Calu3 (cell line): ENCODE measurements at regions of chr3 and their contacts with region 1.

Region 1: GRCh38 chr3:58532794-58533220 is 4.2 kb downstream of the ACOX2 start:
- DNase-seq: peak; percentile 82
- H3K4me3 Mint-ChIP-seq: no peak overlapping the region
- H3K27ac Mint-ChIP-seq: no peak overlapping the region
- H3K4me1 Mint-ChIP-seq: peaks cover 34% of the 10 kb centered on the region
- H3K27me3 Mint-ChIP-seq: no peaks in the 10 kb centered on the region
- CTCF ChIP-seq: peak; percentile 72

Region 2: DNA sequence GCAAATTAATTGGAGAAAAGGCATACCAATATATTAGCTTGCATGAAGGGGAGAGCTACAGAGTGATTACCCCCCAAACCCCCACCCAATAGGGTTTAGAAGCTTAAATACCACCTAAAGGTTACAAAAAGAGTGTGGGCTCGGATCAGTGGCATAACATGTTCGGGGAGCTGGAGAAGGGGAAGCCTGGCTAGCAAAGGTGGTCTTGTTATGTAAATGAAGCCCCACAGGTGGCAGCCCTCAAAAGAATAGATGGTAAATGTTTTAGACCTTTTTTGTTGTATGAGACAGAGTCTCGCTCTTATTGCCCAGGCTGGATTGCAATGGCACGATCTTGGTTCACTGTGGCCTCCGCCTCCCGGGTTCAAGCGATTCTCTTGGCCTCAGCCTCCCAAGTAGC is 211.0 kb before region 1 on chr3:
- CTCF ChIA-PET with region 1: interaction called, 4 read pairs
- intact Hi-C with region 1: loop called (anchors 2 kb)
- DNase-seq: no peak
- H3K4me3 Mint-ChIP-seq: no peak overlapping the region
- H3K27ac Mint-ChIP-seq: no peak overlapping the region
- H3K4me1 Mint-ChIP-seq: peaks cover 5% of the 10 kb centered on the region
- H3K27me3 Mint-ChIP-seq: no peaks in the 10 kb centered on the region
- CTCF ChIP-seq: no peak

Region 3: GRCh38 chr3:58422756-58423325 is 110.0 kb before region 1 on chr3:
- CTCF ChIA-PET with region 1: no interaction called
- intact Hi-C with region 1: loop called (anchors 2 kb)
- DNase-seq: peak; percentile 23
- H3K4me3 Mint-ChIP-seq: no peak overlapping the region
- H3K27ac Mint-ChIP-seq: no peak overlapping the region
- H3K4me1 Mint-ChIP-seq: no peaks in the 10 kb centered on the region
- H3K27me3 Mint-ChIP-seq: no peaks in the 10 kb centered on the region
- CTCF ChIP-seq: no peak

Region 4: GRCh38 chr3:58463181-58463941 is 69.4 kb before region 1 on chr3:
- CTCF ChIA-PET with region 1: no interaction called
- intact Hi-C with region 1: loop called (anchors 1 kb)
- DNase-seq: peak; percentile 84
- H3K4me3 Mint-ChIP-seq: peak overlapping the region; percentile 39
- H3K27ac Mint-ChIP-seq: no peak overlapping the region
- H3K4me1 Mint-ChIP-seq: peaks cover 15% of the 10 kb centered on the region
- H3K27me3 Mint-ChIP-seq: no peaks in the 10 kb centered on the region
- CTCF ChIP-seq: peak; percentile 53

Region 5: DNA sequence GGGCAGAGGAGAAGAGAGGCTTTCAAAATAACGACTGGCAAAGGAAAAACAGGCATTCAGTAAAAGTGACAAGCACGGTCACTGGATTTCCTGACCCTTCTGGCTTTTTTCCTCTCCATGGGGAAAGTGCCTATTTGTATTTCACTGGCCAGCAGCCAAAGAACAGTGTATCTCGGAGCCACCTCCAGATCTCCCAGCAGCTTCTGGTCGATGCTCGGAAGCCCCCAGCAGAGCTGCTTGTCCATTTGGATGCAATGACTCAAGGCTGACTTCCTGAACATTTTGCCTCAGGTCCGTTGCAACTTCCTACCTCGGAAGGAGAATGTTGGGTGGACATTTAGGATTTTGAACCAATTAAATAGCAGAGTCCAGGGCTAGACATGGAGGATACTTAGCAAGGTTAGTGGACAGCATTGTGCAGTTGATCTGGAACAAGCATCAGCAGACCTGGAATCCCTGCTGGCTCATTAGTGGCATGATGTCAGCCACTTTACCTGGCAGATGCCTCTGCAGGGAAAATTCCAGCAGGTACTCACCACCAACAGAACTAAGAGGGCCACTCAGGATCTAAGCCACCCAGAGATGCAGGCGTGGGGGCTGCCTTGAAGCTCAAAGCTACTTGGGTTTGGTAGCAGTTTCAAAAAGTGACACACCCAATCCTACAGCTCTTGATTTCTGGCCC is 43.3 kb after region 1 on chr3:
- CTCF ChIA-PET with region 1: no interaction called
- intact Hi-C with region 1: no loop called
- DNase-seq: no peak
- H3K4me3 Mint-ChIP-seq: no peak overlapping the region
- H3K27ac Mint-ChIP-seq: no peak overlapping the region
- H3K4me1 Mint-ChIP-seq: peaks cover 7% of the 10 kb centered on the region
- H3K27me3 Mint-ChIP-seq: peaks cover 13% of the 10 kb centered on the region
- CTCF ChIP-seq: no peak

Region 6: GRCh38 chr3:58868097-58868779 is 335.4 kb after region 1 on chr3:
- CTCF ChIA-PET with region 1: no interaction called
- intact Hi-C with region 1: no loop called
- DNase-seq: no peak
- H3K4me3 Mint-ChIP-seq: no peak overlapping the region
- H3K27ac Mint-ChIP-seq: no peak overlapping the region
- H3K4me1 Mint-ChIP-seq: no peaks in the 10 kb centered on the region
- H3K27me3 Mint-ChIP-seq: no peaks in the 10 kb centered on the region
- CTCF ChIP-seq: no peak